MCF 10A (cell line): ENCODE measurements at regions of chr3 and their contacts with region 1.

Region 1: DNA sequence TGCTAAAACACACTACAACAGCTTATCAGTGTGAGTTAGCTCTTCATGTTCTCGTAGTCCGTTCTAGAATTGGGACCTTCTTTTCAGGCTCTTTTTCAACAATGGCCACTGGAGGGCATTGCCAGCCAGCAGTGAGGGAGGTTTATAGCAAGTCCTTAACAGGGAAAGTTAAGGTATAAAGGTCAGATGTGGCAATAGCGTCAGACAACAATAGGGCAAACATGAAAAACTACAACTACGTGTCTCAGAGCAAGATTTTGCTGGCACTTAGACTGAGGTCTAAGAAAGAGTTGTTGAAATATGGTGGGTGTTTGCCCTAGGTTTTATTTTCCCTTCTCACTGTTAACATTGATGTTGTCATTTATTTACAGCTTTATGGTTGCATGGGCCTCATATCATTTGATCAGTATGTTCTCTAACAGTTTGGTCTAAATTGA is 161.4 kb downstream of the GMNC start:
- DNase-seq: peak; percentile 86
- H3K4me3 Mint-ChIP-seq: no peak overlapping the region
- H3K27ac Mint-ChIP-seq: no peak overlapping the region
- H3K4me1 Mint-ChIP-seq: peaks cover 14% of the 10 kb centered on the region
- H3K27me3 Mint-ChIP-seq: no peaks in the 10 kb centered on the region
- CTCF ChIP-seq: peak; percentile 75

Region 2: GRCh38 chr3:190017521-190018288 is 683.4 kb before region 1 on chr3:
- CTCF ChIA-PET with region 1: no interaction called
- POLR2A ChIA-PET with region 1: no interaction called
- intact Hi-C with region 1: loop called (anchors 5 kb)
- DNase-seq: peak; percentile 78
- H3K4me3 Mint-ChIP-seq: no peak overlapping the region
- H3K27ac Mint-ChIP-seq: no peak overlapping the region
- H3K4me1 Mint-ChIP-seq: peaks cover 26% of the 10 kb centered on the region
- H3K27me3 Mint-ChIP-seq: no peaks in the 10 kb centered on the region
- CTCF ChIP-seq: peak; percentile 74

Region 3: DNA sequence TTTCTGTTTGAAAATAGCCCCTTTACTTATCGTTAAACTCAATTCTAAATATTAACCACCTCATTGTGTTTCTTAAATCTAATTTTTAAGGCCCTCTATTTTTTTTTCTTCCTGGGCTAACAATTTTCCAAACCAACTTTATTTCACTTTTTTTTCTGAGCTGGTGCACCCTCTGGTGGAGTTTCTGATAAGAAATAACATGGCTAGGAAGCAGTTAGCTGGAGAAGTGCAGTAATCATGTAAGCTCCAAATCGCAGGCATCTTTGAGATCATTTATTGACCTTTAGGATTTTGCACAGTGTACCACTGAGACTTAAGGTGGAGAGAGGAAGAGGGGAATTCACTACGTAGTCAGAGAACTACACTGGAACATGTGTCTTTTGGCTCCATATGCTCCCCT is 257.9 kb before region 1 on chr3:
- CTCF ChIA-PET with region 1: interaction called, 4 read pairs
- POLR2A ChIA-PET with region 1: interaction called, 3 read pairs
- intact Hi-C with region 1: loop called (anchors 5 kb)
- DNase-seq: peak; percentile 30
- H3K4me3 Mint-ChIP-seq: no peak overlapping the region
- H3K27ac Mint-ChIP-seq: no peak overlapping the region
- H3K4me1 Mint-ChIP-seq: no peaks in the 10 kb centered on the region
- H3K27me3 Mint-ChIP-seq: no peaks in the 10 kb centered on the region
- CTCF ChIP-seq: peak; percentile 36

Region 4: GRCh38 chr3:190718671-190719070 is 17.6 kb after region 1 on chr3:
- CTCF ChIA-PET with region 1: interaction called, 20 read pairs
- POLR2A ChIA-PET with region 1: interaction called, 6 read pairs
- intact Hi-C with region 1: no loop called
- DNase-seq: peak; percentile 48
- H3K4me3 Mint-ChIP-seq: peak overlapping the region; percentile 65
- H3K27ac Mint-ChIP-seq: peak overlapping the region; percentile 93
- H3K4me1 Mint-ChIP-seq: no peaks in the 10 kb centered on the region
- H3K27me3 Mint-ChIP-seq: no peaks in the 10 kb centered on the region
- CTCF ChIP-seq: no peak

Region 5: GRCh38 chr3:190883973-190884832 is 183.1 kb after region 1 on chr3:
- CTCF ChIA-PET with region 1: interaction called, 39 read pairs
- POLR2A ChIA-PET with region 1: interaction called, 5 read pairs
- intact Hi-C with region 1: loop called (anchors 5 kb)
- DNase-seq: peak; percentile 80
- H3K4me3 Mint-ChIP-seq: no peak overlapping the region
- H3K27ac Mint-ChIP-seq: no peak overlapping the region
- H3K4me1 Mint-ChIP-seq: peaks cover 18% of the 10 kb centered on the region
- H3K27me3 Mint-ChIP-seq: no peaks in the 10 kb centered on the region
- CTCF ChIP-seq: peak; percentile 82